Esophagus muscularis mucosa (tissue), 4 donors: ENCODE measurements at regions of chr9 and their contacts with region 1.

Region 1: DNA sequence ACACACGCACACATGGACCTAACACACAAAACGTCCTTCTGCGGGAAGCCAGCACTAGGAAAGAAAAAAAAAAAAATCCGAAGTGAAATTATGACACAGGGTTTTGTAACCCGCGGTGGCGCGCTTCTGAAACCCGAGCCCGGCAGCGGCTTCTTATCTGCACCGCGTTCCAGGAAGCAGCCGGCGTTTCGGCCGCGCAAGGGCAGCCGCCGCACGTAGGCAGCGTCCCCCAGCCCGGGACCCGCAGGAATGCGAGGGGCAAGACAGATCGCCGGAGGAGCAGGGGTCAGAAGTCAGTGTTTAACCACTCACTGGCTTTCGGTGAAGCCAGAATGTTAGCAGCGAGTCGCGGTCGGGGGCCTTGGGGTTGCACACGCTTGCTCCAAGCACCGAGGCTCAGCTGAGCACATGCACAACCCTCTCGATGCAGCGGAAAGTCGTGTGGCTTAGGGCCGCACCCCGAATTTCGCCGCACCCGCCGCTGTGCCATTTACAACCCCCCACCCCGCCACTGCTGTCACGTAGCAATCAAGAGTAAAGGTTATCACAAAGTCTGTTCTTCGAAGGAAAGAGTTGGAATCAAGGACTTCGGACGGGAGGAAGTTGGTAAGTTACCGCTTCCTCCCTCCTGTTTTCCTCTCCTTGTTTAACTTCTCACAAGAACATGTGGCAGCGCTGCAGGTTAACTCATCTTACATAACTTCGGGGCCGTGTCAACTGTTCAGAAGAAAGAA is 167.9 kb downstream of the AUH start:
- DNase-seq: peak; percentile 95
- H3K4me3 ChIP-seq: peak overlapping the region; percentile 55 to 58 (median 57)
- H3K27ac ChIP-seq: peak overlapping the region; percentile 98 to 100 (median 99)
- H3K4me1 ChIP-seq: peaks cover 53 to 73% (median 72%) of the 10 kb centered on the region in 4 donors
- H3K27me3 ChIP-seq: no peaks in the 10 kb centered on the region
- CTCF ChIP-seq: no peak
- EP300 ChIP-seq: peak; percentile 33
- POLR2A ChIP-seq: peak; percentile 72

Region 2: GRCh38 chr9:91312717-91313344 is 119.0 kb after region 1 on chr9:
- intact Hi-C with region 1: no loop called
- DNase-seq: no peak
- H3K4me3 ChIP-seq: no peak overlapping the region
- H3K27ac ChIP-seq: no peak overlapping the region
- H3K4me1 ChIP-seq: no peaks in the 10 kb centered on the region
- H3K27me3 ChIP-seq: no peaks in the 10 kb centered on the region
- CTCF ChIP-seq: no peak
- EP300 ChIP-seq: no peak
- POLR2A ChIP-seq: no peak

Region 3: DNA sequence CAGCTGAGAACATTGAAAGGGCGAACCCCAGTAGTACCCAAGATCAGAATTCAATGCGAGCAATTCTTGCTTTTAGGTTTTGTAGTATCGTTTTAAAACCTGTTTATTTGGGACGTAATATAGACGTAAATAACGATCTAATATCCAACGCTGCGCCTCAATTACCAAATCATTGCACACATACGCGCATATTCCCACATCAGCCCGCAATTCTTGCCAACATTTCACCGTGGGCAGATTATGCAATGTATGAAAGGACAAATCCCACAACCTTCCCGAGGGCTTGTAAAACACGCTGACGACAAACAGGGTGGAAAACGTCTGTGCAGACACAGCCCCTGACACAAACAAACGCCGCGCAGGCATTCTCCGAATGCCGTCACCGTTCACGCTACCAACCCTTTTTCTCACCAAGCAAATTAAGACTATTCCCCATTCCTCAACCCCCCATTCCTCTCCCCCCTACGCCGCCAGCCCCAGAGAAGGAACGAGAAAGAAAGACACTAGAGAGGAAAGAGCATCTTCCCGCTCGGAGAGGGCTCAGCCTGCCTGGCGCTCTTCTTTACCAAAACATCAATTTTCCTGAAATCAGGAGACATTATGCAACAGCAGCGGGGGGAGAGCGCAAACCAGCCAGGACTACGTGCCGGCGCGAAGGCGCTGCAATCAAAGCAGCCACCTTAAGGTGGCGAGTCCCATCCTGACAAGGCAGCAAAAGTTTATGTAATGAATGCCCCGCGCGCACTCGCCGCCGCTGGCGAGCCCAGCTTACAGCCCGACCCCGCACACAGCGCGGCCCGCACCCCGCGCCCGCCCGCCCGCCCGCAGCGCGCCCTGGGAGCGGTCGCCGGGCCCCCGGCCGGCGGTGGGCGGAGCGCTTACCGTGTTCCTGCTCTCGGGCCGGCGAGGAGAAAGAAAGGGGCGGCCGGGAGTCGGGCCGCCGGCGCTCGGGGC is 229.2 kb after region 1 on chr9:
- intact Hi-C with region 1: loop called (anchors 2 kb)
- DNase-seq: peak; percentile 95
- H3K4me3 ChIP-seq: peak overlapping the region; percentile 61 to 90 (median 82)
- H3K27ac ChIP-seq: peak overlapping the region; percentile 91 to 99 (median 94)
- H3K4me1 ChIP-seq: peaks cover 15 to 59% (median 51%) of the 10 kb centered on the region in 4 donors
- H3K27me3 ChIP-seq: no peaks in the 10 kb centered on the region
- CTCF ChIP-seq: peak in 1 of 3 experiments; percentile 47
- EP300 ChIP-seq: peak; percentile 88
- POLR2A ChIP-seq: peak; percentile 42

Region 4: DNA sequence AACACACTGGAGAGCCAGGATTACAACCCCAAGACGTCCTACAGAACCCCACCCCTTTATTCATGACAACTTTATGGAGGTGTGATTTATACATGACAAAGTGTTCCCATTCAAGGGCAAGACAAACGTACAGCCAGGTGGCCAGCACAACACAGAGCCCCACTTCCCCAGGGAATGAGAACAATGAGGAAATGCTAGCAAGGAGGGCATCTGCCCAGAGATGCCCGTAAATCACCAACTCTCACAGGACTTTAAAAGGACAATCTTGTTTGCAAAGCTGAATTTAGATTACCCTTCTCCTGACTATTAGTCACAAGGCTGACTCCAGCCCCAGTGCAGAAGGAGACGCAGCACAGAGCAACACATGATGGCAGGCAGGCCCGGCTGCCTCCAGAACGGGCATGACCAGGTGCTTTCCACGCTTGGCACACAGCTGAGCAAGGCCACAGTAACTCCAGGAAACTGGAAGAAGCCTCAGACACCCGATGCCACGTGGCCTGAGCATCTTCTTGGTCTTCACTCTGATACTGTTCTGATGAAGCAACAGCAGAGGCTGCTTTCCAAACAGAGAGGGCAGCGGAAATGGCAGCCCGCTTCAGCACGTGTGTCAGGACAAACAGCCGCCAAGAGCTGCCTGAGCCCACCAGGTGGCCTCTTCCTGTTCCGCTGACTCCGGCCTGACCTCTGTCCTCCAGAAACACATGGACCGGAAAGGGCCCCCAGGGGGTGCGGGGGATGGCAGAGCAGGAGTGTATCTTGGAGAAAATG is 704.8 kb after region 1 on chr9:
- intact Hi-C with region 1: no loop called
- DNase-seq: no peak
- H3K4me3 ChIP-seq: no peak overlapping the region
- H3K27ac ChIP-seq: peak overlapping the region; percentile 78 to 88 (median 80)
- H3K4me1 ChIP-seq: peaks cover 28 to 100% (median 99%) of the 10 kb centered on the region in 4 donors
- H3K27me3 ChIP-seq: no peaks in the 10 kb centered on the region
- CTCF ChIP-seq: no peak
- EP300 ChIP-seq: no peak
- POLR2A ChIP-seq: no peak